H1 (cell line): ENCODE measurements at regions of chr9 and their contacts with region 1.

Region 1: DNA sequence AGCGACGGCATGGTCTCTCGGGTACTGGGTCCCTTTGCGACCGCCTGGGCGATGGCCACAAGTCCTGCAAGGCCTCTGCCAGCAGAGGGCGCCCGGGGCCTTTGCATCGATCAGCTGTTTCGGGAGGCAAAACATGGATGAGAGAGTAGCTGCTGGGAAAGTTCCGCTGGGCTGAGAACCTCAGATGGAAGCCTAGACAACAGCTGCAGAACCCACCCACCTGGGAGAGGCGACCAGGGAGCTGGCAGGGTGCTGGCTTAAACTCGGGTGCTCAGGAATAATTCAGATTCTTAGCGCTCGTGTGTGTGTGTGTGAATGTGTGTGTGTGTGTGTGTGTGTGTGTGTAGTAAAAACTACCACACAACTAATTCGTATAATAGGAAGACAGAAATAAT is 50.0 kb downstream of the TRIM32 start:
- DNase-seq: peak; percentile 75 to 98
- H3K4me3 ChIP-seq: no peak overlapping the region
- H3K27ac ChIP-seq: no peak overlapping the region
- H3K4me1 ChIP-seq: peaks cover 0 to 9% (median 5%) of the 10 kb centered on the region in 4 experiments; a peak in 2 of 7 replicates
- H3K27me3 ChIP-seq: no peaks in the 10 kb centered on the region; a peak in 1 of 7 replicates
- CTCF ChIP-seq: peak; percentile 86 to 98 (median 97)
- EP300 ChIP-seq: no peak
- POLR2A ChIP-seq: no peak
- RAD21 ChIP-seq: peak; percentile 100

Region 2: GRCh38 chr9:116724123-116724522 is 13.0 kb before region 1 on chr9:
- CTCF ChIA-PET with region 1: interaction called, 19 read pairs
- POLR2A ChIA-PET with region 1: no interaction called
- DNase-seq: no peak
- H3K4me3 ChIP-seq: no peak overlapping the region
- H3K27ac ChIP-seq: no peak overlapping the region
- H3K4me1 ChIP-seq: no peaks in the 10 kb centered on the region
- H3K27me3 ChIP-seq: no peaks in the 10 kb centered on the region
- CTCF ChIP-seq: no peak
- EP300 ChIP-seq: no peak
- POLR2A ChIP-seq: no peak
- RAD21 ChIP-seq: no peak

Region 3: GRCh38 chr9:116798521-116799021 is 61.4 kb after region 1 on chr9:
- CTCF ChIA-PET with region 1: interaction called, 12 read pairs
- POLR2A ChIA-PET with region 1: no interaction called
- DNase-seq: no peak
- H3K4me3 ChIP-seq: no peak overlapping the region
- H3K27ac ChIP-seq: no peak overlapping the region
- H3K4me1 ChIP-seq: peaks cover 0 to 12% (median 9%) of the 10 kb centered on the region in 4 experiments; a peak in 5 of 7 replicates
- H3K27me3 ChIP-seq: no peaks in the 10 kb centered on the region
- CTCF ChIP-seq: no peak
- EP300 ChIP-seq: no peak
- POLR2A ChIP-seq: no peak
- RAD21 ChIP-seq: no peak

Region 4: DNA sequence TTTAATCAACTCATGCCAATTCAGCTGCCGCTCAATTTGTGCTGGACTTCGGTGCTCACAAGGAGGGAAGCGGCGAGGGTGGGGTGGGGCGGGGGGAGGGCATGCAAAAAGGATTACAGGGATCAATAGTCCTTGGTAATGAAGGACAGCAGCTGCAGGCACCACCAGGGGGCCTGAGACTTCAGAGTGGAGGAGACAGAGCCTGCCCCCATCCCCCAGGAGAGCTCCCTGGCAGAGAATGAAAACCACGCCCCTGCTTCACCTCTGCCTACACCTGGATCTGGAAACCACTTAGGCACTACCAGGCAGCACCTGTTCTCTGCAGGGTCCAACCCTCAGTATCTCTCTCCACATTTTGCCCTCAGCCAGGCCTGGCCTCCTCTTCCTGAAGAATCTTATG is 105.5 kb after region 1 on chr9:
- CTCF ChIA-PET with region 1: interaction called, 12 read pairs
- POLR2A ChIA-PET with region 1: interaction called, 3 read pairs
- DNase-seq: peak; percentile 39 to 63
- H3K4me3 ChIP-seq: no peak overlapping the region
- H3K27ac ChIP-seq: no peak overlapping the region
- H3K4me1 ChIP-seq: peaks cover 1 to 15% (median 11%) of the 10 kb centered on the region in 4 experiments; a peak in 6 of 7 replicates
- H3K27me3 ChIP-seq: no peaks in the 10 kb centered on the region
- CTCF ChIP-seq: peak; percentile 34 to 40 (median 38)
- EP300 ChIP-seq: no peak
- POLR2A ChIP-seq: no peak
- RAD21 ChIP-seq: peak; percentile 28 to 46; a peak in 2 of 4 replicates